SK-N-SH (cell line): ENCODE measurements at regions of chr2 and their contacts with region 1.

Region 1: DNA sequence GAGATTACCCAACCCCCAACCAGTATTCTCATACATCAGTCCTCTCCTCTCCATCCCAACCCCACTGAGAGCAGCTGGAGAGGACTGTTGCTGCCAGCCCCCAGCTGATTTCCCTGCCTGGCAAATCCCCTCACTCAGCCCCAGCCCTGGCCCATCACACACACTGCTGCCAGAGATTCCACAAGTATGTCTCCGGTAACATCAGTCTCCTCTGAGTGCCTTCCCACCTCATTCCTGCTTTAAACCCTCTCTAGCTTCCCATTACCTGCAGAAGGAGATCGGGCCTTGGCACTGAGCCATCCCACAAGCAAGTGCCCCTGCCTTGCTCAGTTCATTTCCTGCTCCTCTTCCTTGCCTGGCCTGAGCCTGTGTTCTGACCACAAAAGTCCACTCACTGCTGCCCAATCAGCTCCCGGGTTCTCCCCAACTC is 50.6 kb upstream of the ZFP36L2 start:
- DNase-seq: peak; percentile 56
- H3K4me3 ChIP-seq: no peak overlapping the region
- H3K27ac ChIP-seq: peak overlapping the region; percentile 42 to 95; a peak in 3 of 4 replicates
- H3K4me1 ChIP-seq: peaks cover 39 to 58% of the 10 kb centered on the region in 2 experiments
- H3K27me3 ChIP-seq: no peaks in the 10 kb centered on the region
- CTCF ChIP-seq: no peak
- EP300 ChIP-seq: no peak; a peak in 1 of 4 replicates
- RAD21 ChIP-seq: no peak

Region 2: DNA sequence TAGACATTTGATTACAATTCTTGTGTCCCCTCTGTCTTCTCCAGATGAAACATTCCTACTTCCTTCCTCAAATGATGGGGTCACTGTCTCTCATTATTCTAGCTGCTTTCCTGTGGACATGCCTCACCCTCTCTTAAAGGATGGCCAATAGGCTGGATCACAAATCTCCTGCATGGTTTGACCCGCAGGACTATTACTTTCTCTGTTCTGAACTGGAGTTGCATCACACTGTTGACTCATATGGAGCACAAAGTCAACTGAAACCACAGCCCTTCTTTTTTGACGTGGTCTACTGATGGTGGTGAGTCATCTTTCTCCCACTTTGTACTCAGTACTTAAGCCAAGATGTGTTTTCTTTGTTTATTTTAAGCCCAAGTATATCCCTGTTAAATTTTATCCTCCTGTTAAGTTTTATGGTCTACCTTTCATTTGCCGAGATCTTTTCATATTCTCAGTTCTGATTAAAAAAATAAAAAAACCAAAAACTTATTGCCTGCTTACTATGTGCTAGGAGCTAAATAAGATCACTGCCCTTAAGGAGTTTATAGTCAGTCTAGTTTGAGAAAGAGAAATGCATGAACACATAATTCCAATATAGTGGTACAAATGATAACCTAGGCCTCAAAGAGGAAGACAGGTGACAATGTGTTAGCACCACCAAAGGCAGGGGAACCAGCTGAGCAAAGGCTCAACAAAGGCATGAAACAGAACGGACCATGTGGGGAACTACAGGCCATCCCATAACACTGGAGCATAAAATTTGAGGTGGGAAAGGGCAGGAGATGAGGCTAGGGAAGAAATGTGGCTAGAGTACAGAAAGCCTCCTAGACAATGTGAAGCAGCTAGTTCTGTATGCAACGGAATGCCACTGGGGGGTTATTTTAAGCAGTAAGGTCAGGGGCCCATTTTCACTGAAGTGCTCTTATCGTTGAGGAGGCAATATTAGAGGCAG is 17.0 kb after region 1 on chr2:
- CTCF ChIA-PET with region 1: interaction called, 16 read pairs
- POLR2A ChIA-PET with region 1: no interaction called
- DNase-seq: no peak
- H3K4me3 ChIP-seq: no peak overlapping the region
- H3K27ac ChIP-seq: peak overlapping the region in 1 of 2 experiments; percentile 85; a peak in 2 of 4 replicates
- H3K4me1 ChIP-seq: peaks cover 6% of the 10 kb centered on the region in 2 experiments; a peak in 2 of 4 replicates
- H3K27me3 ChIP-seq: no peaks in the 10 kb centered on the region
- CTCF ChIP-seq: no peak
- EP300 ChIP-seq: peak in 1 of 2 experiments; percentile 82; a peak in 1 of 4 replicates
- RAD21 ChIP-seq: no peak

Region 3: DNA sequence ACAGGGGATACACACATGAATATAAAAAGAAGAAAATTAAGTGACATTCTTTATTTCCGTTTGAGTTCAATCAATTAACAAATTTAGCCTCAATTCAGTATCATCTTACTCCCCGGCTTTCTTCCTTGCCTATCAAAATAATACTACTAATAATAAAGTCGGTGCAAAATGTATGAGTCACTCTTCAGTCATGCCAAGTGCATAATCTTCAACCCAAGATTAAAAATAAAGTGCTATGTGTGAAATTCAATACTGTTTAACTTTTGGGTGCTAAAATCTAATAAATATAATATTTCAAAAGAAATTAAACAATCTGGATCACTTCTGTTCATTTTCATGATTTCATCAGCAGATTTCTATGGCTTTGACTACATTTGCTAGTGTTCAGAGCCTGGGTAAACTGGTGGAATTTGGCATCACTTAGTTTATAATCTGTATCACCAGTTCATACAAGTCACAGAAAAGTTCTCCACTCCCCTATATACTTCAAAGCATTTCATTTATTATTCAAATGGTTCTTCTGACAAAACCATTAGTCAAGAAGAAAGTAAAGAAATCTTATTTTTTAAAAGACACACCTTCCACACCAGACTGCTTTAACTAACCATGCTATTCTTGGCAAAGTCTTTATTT is 135.3 kb after region 1 on chr2:
- CTCF ChIA-PET with region 1: no interaction called
- POLR2A ChIA-PET with region 1: no interaction called
- DNase-seq: no peak
- H3K4me3 ChIP-seq: no peak overlapping the region
- H3K27ac ChIP-seq: peak overlapping the region; percentile 8 to 22; a peak in 2 of 4 replicates
- H3K4me1 ChIP-seq: peaks cover 24 to 36% of the 10 kb centered on the region in 2 experiments
- H3K27me3 ChIP-seq: no peaks in the 10 kb centered on the region
- CTCF ChIP-seq: no peak
- EP300 ChIP-seq: peak in 1 of 2 experiments; percentile 46; a peak in 2 of 4 replicates
- RAD21 ChIP-seq: no peak

Region 4: DNA sequence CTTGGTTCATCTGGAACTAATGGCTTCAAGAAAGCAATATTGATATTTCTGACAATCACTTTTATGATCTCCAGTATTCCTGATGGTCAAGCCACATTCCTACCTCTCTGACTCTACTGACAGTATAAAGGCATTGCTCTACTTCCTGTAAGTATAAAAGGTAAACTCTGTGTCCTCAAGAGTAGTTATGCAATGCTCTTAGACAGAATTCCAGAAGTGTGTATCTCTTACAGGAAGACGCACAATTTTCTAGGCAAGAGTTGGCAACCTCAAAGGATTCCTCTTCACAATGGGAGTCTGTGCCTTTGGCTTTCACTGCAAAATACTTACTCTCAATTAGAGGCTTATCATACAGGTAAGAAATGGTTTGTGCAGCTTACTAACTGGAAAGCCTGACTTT is 218.8 kb after region 1 on chr2:
- CTCF ChIA-PET with region 1: no interaction called
- POLR2A ChIA-PET with region 1: no interaction called
- DNase-seq: no peak
- H3K4me3 ChIP-seq: no peak overlapping the region
- H3K27ac ChIP-seq: no peak overlapping the region
- H3K4me1 ChIP-seq: peaks cover 0 to 3% of the 10 kb centered on the region in 2 experiments; a peak in 1 of 4 replicates
- H3K27me3 ChIP-seq: no peaks in the 10 kb centered on the region
- CTCF ChIP-seq: no peak
- EP300 ChIP-seq: no peak
- RAD21 ChIP-seq: no peak